H1 (cell line): ENCODE measurements at regions of chr6 and their contacts with region 1.

Region 1: DNA sequence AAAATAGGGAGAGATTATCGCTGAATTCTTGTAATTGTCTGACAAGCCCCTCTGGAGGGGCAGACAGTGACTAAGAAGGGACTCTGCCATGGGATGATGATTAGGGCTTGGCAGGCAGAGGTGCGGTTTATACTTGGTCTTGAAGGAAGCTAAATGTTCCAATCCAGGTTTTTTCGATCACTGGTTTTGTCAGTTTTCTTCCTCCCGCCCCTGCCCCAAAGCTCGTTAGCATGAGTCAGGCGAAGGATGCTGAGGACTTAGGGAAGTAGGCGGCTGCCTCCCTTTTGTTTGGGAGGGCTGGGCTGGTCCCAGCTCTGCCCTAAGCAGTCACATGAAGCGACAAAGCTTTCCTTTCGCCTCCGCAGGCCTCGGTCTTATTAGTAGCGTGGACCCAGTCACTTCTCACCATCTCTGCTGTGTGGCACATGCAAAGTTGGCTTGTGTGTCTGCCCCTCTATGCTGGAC is 314.2 kb downstream of the CDC5L start:
- DNase-seq: peak; percentile 19 to 49
- H3K4me3 ChIP-seq: no peak overlapping the region
- H3K27ac ChIP-seq: no peak overlapping the region
- H3K4me1 ChIP-seq: peaks cover 0 to 9% (median 3%) of the 10 kb centered on the region in 4 experiments; a peak in 3 of 7 replicates
- H3K27me3 ChIP-seq: no peaks in the 10 kb centered on the region; a peak in 1 of 7 replicates
- CTCF ChIP-seq: no peak
- EP300 ChIP-seq: no peak
- POLR2A ChIP-seq: no peak
- RAD21 ChIP-seq: no peak

Region 2: DNA sequence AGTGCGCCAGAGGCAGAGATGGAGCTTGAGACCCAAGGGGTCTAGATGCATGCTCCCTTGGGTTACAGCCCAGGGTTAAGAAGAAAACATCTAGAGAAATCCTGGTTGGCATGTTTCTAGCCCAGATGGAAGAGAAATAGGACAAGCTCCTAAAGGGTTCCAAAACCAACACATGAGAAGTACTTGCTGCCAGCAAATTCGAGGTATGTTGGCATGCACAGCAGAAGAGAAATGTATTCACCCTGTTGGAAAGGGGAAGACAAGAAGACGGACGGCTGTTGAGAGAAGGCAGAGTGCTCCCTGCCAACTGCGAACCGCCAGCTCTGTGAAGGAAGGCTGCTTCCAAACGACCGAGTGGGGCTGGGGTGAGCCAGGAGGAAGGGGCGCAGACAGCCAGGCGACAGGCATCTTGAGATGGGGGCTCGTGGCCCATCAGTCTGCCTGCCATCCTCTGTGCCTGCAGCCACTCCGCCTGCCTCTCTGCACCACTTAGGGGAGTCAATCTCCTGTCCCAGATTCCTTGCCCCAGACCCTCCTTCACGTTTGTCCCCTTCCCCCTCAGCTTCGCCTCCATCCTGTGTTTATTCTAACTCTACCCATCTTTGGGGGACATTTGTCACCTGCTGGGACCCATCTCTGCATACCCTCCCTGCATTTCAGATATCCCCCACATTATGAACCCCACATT is 65.0 kb before region 1 on chr6:
- CTCF ChIA-PET with region 1: no interaction called
- POLR2A ChIA-PET with region 1: no interaction called
- DNase-seq: no peak
- H3K4me3 ChIP-seq: no peak overlapping the region
- H3K27ac ChIP-seq: no peak overlapping the region
- H3K4me1 ChIP-seq: no peaks in the 10 kb centered on the region
- H3K27me3 ChIP-seq: no peaks in the 10 kb centered on the region
- CTCF ChIP-seq: no peak
- EP300 ChIP-seq: no peak
- POLR2A ChIP-seq: no peak
- RAD21 ChIP-seq: no peak

Region 3: GRCh38 chr6:44667668-44668390 is 33.8 kb before region 1 on chr6:
- CTCF ChIA-PET with region 1: interaction called, 12 read pairs
- POLR2A ChIA-PET with region 1: interaction called, 4 read pairs
- DNase-seq: peak in 1 of 2 experiments; percentile 75
- H3K4me3 ChIP-seq: no peak overlapping the region
- H3K27ac ChIP-seq: no peak overlapping the region
- H3K4me1 ChIP-seq: peaks cover 6 to 39% (median 27%) of the 10 kb centered on the region in 4 experiments
- H3K27me3 ChIP-seq: no peaks in the 10 kb centered on the region; a peak in 1 of 7 replicates
- CTCF ChIP-seq: peak; percentile 55 to 81 (median 78)
- EP300 ChIP-seq: no peak
- POLR2A ChIP-seq: no peak
- RAD21 ChIP-seq: peak; percentile 49 to 67